ENCODE measurements at regions of chr2 and their contacts with region 1.

Region 1: GRCh38 chr2:172102391-172103278 is at the start of gene DLX2:
- DNase-seq: peak; percentile 93
- H3K4me3 ChIP-seq: peak within 1 kb of the TSS; percentile 73
- H3K27ac ChIP-seq: no peak within 1 kb of the TSS
- H3K4me1 ChIP-seq: peaks cover 34% of the 10 kb centered on the region
- H3K27me3 ChIP-seq: no peaks in the 10 kb centered on the region
- CTCF ChIP-seq: no peak
- total RNA-seq, gene DLX2: 0.65 and 0.76 TPM in 2 replicates

Region 2: GRCh38 chr2:170973492-170974303 is 1128.9 kb before region 1 on chr2:
- CTCF ChIA-PET with region 1: no interaction called
- POLR2A ChIA-PET with region 1: no interaction called
- intact Hi-C with region 1: loop called (anchors 10 kb)
- DNase-seq: peak; percentile 65 to 93
- H3K4me3 ChIP-seq: peak overlapping the region; percentile 70
- H3K27ac ChIP-seq: no peak overlapping the region
- H3K4me1 ChIP-seq: peaks cover 5% of the 10 kb centered on the region; the same call in 1 of the 2 replicates
- H3K27me3 ChIP-seq: no peaks in the 10 kb centered on the region
- CTCF ChIP-seq: peak; percentile 72

Region 3: DNA sequence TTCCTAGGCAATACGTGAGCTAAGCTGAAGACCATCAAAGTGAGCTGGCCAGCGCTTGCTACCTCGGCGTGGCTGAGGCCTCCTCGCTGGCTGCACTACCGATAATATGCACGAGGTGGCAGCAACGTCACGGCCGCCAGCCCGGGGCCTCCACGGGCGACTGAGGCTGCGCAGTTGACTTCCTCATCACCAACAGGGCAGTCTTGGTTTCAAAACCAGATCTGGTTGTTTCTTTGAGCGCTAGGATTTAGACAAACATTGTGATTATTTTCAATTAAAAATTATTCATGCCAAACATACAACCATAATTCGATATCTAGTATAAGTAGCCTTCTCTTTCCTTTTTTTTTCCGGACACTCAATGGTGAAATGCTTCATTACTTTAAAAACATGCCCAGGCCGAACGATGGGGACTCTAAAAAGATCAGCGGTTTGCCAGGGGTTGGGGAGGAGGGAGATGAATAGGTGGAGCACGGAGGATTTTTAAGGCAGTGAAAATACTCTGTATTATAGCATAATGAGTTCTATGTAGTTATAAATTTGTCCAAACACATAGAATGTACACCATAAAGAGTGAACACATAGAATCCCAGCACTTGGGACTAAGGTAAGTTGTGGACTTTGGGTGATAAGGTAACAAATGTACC is 528.4 kb before region 1 on chr2:
- CTCF ChIA-PET with region 1: no interaction called
- POLR2A ChIA-PET with region 1: no interaction called
- intact Hi-C with region 1: loop called (anchors 2 kb)
- DNase-seq: peak; percentile 55 to 86
- H3K4me3 ChIP-seq: no peak overlapping the region
- H3K27ac ChIP-seq: no peak overlapping the region
- H3K4me1 ChIP-seq: no peaks in the 10 kb centered on the region
- H3K27me3 ChIP-seq: no peaks in the 10 kb centered on the region
- CTCF ChIP-seq: peak; percentile 98

Region 4: GRCh38 chr2:171703574-171704347 is 398.9 kb before region 1 on chr2:
- CTCF ChIA-PET with region 1: interaction called, 10 read pairs
- POLR2A ChIA-PET with region 1: no interaction called
- intact Hi-C with region 1: loop called (anchors 1 kb)
- DNase-seq: peak; percentile 10 to 59
- H3K4me3 ChIP-seq: no peak overlapping the region
- H3K27ac ChIP-seq: peak overlapping the region; percentile 18; the same call in 1 of the 2 replicates
- H3K4me1 ChIP-seq: no peaks in the 10 kb centered on the region
- H3K27me3 ChIP-seq: no peaks in the 10 kb centered on the region
- CTCF ChIP-seq: peak; percentile 85

Region 5: GRCh38 chr2:171893824-171894611 is 208.6 kb before region 1 on chr2 and contains the start of gene SLC25A12:
- CTCF ChIA-PET with region 1: interaction called, 3 read pairs
- POLR2A ChIA-PET with region 1: no interaction called
- intact Hi-C with region 1: loop called (anchors 2 kb)
- DNase-seq: peak; percentile 78 to 92
- H3K4me3 ChIP-seq: peak within 1 kb of the TSS; percentile 88
- H3K27ac ChIP-seq: peak within 1 kb of the TSS; percentile 16; the same call in 1 of the 2 replicates
- H3K4me1 ChIP-seq: peaks cover 22% of the 10 kb centered on the region
- H3K27me3 ChIP-seq: no peaks in the 10 kb centered on the region
- CTCF ChIP-seq: no peak
- total RNA-seq, gene SLC25A12: 25.9 and 28.8 TPM in 2 replicates

Region 6: DNA sequence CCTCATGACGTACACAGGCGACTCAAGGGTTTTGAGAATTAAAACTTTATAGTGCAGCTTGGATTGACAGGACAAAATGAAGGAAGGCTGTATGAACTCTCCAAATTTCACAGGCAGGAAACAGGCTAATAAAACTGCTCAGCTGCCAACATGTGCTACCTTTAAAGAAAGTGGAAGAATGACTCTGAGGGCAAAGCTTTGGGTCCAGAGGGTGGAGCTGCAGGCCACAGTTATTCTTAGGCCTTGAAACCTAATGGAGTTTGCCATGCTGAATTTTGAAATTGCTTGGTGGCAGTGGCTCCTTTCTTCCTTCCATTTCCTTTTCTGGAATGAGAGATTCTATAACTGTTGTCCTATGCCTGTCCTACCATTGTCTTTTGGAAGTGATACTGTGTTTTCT is 145.6 kb before region 1 on chr2:
- CTCF ChIA-PET with region 1: interaction called, 3 read pairs
- POLR2A ChIA-PET with region 1: no interaction called
- intact Hi-C with region 1: loop called (anchors 1 kb)
- DNase-seq: peak in 1 of 2 experiments; percentile 21
- H3K4me3 ChIP-seq: no peak overlapping the region
- H3K27ac ChIP-seq: no peak overlapping the region
- H3K4me1 ChIP-seq: no peaks in the 10 kb centered on the region
- H3K27me3 ChIP-seq: no peaks in the 10 kb centered on the region
- CTCF ChIP-seq: peak; percentile 54

Region 7: GRCh38 chr2:172234716-172235691 is 132.4 kb after region 1 on chr2:
- CTCF ChIA-PET with region 1: interaction called, 11 read pairs
- POLR2A ChIA-PET with region 1: no interaction called
- intact Hi-C with region 1: no loop called
- DNase-seq: no peak
- H3K4me3 ChIP-seq: no peak overlapping the region
- H3K27ac ChIP-seq: no peak overlapping the region
- H3K4me1 ChIP-seq: peaks cover 30% of the 10 kb centered on the region
- H3K27me3 ChIP-seq: no peaks in the 10 kb centered on the region
- CTCF ChIP-seq: no peak

Region 8: DNA sequence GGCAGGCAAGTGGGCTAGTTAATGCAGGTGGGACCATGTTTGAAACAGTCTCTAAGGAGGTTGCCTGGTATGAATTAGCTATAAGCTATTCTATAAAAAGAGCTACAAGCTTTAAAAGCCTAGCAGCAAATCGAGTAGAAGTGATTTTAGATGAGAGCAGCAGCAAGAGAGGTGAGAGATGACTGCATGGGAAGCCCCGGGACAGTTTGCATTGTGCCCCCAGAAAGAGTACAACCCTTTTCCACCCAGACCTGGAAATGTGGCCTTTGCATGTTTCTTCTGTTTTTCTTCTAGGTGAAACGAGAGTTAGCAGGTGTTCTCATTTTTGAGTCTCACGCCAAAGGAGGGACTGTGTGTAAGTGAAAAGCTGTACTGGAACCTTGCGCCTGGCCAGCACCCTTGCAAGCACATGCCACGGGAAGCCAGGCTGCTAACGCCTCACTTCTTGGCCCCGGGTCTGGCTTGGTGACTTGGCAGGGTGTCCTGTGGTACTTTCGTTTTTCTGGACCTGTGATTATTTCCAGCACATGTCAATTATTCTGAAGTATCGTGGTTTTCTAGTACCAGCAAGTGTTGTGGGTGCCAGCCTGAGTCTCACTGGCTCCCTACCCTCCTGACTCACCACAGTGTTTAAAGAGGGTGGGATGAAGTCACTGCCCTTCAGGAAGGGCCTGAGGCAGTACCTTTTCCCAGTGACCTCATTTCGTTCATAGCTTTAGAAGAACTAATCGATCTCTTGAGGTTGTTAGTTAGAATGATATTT is 882.7 kb after region 1 on chr2:
- CTCF ChIA-PET with region 1: no interaction called
- POLR2A ChIA-PET with region 1: no interaction called
- intact Hi-C with region 1: no loop called
- DNase-seq: peak; percentile 78 to 99
- H3K4me3 ChIP-seq: peak overlapping the region; percentile 37
- H3K27ac ChIP-seq: peak overlapping the region; percentile 94
- H3K4me1 ChIP-seq: peaks cover 39% of the 10 kb centered on the region
- H3K27me3 ChIP-seq: no peaks in the 10 kb centered on the region
- CTCF ChIP-seq: no peak